Activated CD4-positive, alpha-beta T cell treated with anti-CD3 and anti-CD28 coated beads, Interleukin-2, amount 10 ng/mL, durations not matched to agents 7 days and 5 days (primary cell): ENCODE measurements at regions of chr19 and their contacts with region 1.

Region 1: DNA sequence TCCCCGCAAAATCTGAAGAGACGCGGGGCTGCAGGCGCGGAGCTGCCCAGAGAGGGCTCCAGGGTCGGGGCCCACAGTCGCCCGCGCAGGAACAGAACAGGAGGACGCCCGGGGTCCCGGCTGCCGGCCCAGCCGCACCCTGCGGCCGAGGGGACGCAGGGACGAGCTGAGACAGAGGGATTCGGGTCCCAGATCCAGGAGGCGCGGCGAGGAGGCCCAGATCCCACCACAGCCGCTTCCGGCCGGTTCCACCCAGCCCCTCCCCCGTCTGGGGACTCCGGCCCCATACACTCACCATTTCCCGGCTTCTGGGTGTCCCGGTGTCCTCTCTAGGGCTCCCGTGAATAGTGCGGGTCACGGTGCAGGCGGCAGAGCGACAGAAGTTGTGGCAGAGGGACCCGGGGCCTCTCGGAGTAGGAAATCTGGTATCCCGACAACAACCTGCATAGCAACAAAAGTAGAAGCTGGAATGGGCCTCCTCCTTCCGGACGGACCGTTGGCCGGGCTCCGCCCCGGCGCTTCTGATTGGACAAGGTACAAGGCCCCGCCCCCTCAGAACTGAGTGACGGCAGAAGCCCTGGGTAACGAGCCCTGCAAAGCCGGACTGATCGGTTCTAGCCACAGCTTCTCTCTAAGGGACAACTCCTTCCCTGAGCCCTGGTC is at the start of gene ZNF20:
- DNase-seq: peak; percentile 93
- H3K4me3 Mint-ChIP-seq: peak within 1 kb of the TSS; percentile 88
- H3K27ac Mint-ChIP-seq: peak within 1 kb of the TSS; percentile 85
- H3K4me1 Mint-ChIP-seq: peaks cover 38% of the 10 kb centered on the region
- H3K27me3 Mint-ChIP-seq: no peaks in the 10 kb centered on the region
- total RNA-seq, gene ZNF20: 3.7 to 4.2 TPM

Region 2: DNA sequence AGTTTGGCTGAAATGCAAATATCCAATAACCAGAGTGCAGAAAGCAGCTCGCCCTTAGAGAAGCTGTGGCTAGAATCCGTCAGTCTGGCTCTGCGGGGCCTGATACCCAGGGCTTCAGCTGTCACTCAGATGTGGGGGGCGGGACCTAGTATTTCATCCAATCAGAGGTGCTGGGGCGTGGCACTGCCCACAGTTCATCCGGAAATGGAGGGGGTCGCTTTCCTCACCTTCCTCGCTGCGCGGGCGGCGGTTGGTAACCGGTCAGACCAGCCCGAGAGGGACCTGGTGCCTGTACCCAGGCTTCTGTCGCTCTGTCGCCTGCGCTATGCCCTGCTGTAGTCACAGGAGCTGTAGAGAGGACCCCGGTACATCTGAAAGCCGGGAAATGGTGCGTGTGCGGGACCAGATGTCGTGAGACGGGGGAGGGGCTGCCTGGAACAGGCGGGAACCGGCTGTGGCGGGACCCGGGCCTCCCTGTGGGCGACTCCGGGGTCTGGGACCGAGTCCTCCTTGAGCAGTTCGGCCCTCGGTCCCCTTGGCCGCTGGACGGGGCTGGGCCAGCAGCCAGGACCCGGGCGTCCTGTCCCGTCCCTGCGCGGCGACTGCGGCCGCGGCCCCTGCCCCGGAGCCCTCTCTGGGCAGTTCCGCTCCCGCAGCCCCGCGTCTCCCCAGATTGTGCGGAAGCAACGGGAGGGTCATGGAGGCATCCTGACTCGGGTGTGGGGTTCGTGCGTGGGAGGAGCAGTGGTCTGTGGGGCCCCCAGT is 214.9 kb before region 1 on chr19 and contains the start of gene ZNF700:
- CTCF ChIA-PET with region 1: interaction called, 12 read pairs
- POLR2A ChIA-PET with region 1: interaction called, 12 read pairs
- DNase-seq: peak; percentile 96
- H3K4me3 Mint-ChIP-seq: peak within 1 kb of the TSS; percentile 97
- H3K27ac Mint-ChIP-seq: peak within 1 kb of the TSS; percentile 99
- H3K4me1 Mint-ChIP-seq: peaks cover 36% of the 10 kb centered on the region
- H3K27me3 Mint-ChIP-seq: no peaks in the 10 kb centered on the region
- total RNA-seq, gene ZNF700: 21.2 to 22.1 TPM

Region 3: DNA sequence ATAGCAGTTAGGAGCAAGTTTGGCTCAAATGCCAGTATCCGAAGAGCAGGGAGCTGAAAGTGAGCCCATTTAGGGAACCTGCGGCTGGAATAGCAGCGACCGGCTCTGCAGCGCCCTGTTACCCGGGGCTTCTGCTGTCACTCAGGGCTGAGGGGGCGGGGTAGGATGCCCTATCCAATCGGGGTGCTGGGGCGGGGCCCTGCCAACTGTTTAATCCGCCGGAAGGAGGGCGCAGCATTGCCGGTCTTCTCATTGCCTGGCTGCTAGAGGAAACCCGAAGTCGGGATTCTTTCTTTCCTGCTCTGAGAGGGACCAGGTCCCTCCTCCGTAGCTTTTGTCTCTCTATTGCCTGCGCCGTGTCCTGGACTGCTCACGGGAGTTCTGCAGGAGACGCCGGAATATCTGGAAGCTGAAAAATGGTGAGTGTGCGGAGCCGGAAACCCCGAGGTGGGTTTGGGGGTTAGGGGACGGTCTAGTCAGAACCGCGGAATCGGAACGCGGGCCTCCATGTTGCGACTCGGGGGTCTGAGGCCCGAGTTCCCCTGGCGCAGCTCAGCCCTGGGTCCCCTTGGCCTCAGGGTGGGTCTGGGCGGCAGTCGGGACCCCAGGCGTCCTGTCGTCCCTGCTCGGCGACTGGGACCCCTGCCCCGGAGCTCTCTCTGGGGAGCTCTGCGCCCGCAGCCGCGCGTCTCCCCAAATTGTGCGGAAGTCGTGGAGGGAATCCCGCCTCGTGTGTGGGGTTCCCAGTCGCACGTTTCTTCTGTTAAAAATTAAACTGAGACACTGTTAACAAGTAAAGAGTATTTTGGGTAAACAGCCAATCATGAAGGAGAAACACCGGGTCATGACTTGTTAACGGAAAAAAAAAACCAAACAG is 152.4 kb before region 1 on chr19:
- CTCF ChIA-PET with region 1: interaction called, 11 read pairs
- POLR2A ChIA-PET with region 1: no interaction called
- DNase-seq: peak; percentile 96
- H3K4me3 Mint-ChIP-seq: peak overlapping the region; percentile 98
- H3K27ac Mint-ChIP-seq: peak overlapping the region; percentile 98
- H3K4me1 Mint-ChIP-seq: peaks cover 22% of the 10 kb centered on the region
- H3K27me3 Mint-ChIP-seq: no peaks in the 10 kb centered on the region

Region 4: GRCh38 chr19:12035220-12036153 is 104.5 kb before region 1 on chr19 and contains the start of gene ZNF433:
- CTCF ChIA-PET with region 1: no interaction called
- POLR2A ChIA-PET with region 1: no interaction called
- DNase-seq: peak; percentile 55
- H3K4me3 Mint-ChIP-seq: peak within 1 kb of the TSS; percentile 78
- H3K27ac Mint-ChIP-seq: peak within 1 kb of the TSS; percentile 73
- H3K4me1 Mint-ChIP-seq: peaks cover 10% of the 10 kb centered on the region
- H3K27me3 Mint-ChIP-seq: no peaks in the 10 kb centered on the region
- total RNA-seq, gene ZNF433: 0.10 to 0.33 TPM

Region 5: GRCh38 chr19:12064590-12065538 is 75.2 kb before region 1 on chr19 and contains the start of gene ZNF844:
- CTCF ChIA-PET with region 1: interaction called, 20 read pairs
- POLR2A ChIA-PET with region 1: interaction called, 7 read pairs
- DNase-seq: peak; percentile 69
- H3K4me3 Mint-ChIP-seq: peak within 1 kb of the TSS; percentile 78
- H3K27ac Mint-ChIP-seq: peak within 1 kb of the TSS; percentile 88
- H3K4me1 Mint-ChIP-seq: peaks cover 10% of the 10 kb centered on the region
- H3K27me3 Mint-ChIP-seq: no peaks in the 10 kb centered on the region
- total RNA-seq, gene ZNF844: 3.5 to 3.6 TPM

Region 6: DNA sequence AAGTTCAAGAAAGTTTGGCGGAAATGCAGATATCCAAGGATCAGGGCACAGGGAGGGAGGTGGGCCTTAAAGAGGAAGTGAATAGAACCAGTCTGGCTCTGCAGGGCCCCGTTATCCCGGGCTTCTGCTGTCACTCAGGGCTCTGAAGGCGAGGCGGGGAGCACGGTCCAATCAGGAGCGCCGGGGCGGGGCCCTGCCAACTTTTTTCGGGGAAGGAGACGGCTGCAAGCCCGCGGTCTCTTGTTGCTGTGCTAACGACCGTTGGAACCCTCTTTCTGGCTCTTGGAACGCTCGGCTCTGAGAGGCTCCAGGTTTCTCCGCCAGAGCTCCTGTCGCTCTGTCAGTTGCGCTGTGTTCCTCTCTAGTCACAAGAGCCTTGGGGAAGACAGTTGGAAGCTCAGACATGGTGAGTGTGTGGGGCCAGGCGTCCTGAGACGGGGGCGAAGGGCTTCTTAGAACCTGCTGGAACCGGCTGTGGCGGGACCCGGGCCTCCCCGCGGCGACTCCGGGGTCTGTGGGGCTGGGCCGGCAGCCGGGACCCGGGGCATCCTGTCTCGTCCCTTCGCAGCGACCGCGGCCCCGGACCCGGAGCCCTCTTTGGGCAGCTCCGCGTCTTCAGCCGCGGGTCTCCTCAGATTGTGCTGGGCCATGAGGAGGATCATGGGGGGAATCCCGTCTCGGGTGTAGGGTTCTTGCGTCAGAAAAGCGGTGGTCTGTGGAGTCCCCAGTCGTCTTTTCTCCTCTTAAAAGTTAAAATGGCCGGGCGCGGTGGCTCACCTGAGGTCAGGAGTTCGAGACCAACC is 47.8 kb before region 1 on chr19:
- CTCF ChIA-PET with region 1: interaction called, 18 read pairs
- POLR2A ChIA-PET with region 1: no interaction called
- DNase-seq: peak; percentile 68
- H3K4me3 Mint-ChIP-seq: peak overlapping the region; percentile 81
- H3K27ac Mint-ChIP-seq: peak overlapping the region; percentile 85
- H3K4me1 Mint-ChIP-seq: peaks cover 22% of the 10 kb centered on the region
- H3K27me3 Mint-ChIP-seq: no peaks in the 10 kb centered on the region

Region 7: DNA sequence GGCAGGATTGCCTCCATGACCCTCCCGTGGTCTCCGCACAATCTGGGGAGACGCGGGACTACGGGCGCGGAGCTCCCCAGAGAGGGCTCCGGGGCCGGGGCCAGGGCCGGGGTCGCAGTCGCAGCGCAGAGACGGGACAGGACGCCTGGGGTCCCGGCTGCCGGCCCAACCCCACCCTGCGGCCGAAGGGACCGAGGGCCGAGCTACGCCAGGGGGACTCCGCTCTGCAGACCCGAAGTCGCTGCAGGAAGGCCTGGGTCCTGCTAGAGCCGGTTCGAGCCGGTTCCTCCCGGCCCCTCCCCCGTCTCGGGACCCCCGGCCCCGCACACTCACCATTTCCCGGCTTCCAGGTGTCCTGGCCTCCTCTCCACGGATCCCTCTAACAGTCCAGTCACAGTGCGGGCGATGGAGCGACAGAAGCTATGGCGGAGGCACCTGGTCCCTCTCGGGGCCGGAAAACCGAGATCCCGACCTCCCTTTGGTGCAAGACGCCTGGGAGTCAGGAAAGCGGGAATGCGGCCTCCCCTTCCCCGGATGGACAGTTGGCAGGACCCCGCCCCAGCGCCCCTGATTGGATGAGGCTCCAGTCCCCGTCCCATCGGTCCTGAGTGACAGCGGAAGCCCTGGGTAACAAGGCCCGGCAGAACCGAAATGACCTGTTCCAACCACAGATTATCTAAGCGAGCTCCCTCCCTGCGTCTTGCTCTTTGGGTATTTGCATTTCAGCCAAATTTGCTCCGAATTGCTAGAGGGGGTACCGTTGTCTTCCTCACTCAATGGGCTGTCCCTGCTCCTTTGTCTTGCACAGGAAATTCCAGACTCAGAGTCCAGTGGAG is 16.4 kb after region 1 on chr19 and contains the start of gene ZNF625:
- CTCF ChIA-PET with region 1: interaction called, 10 read pairs
- POLR2A ChIA-PET with region 1: interaction called, 3 read pairs
- DNase-seq: peak; percentile 50
- H3K4me3 Mint-ChIP-seq: peak within 1 kb of the TSS; percentile 85
- H3K27ac Mint-ChIP-seq: peak within 1 kb of the TSS; percentile 90
- H3K4me1 Mint-ChIP-seq: peaks cover 22% of the 10 kb centered on the region
- H3K27me3 Mint-ChIP-seq: no peaks in the 10 kb centered on the region
- total RNA-seq, gene ZNF625: 6.1 to 6.7 TPM